CD4-positive, alpha-beta T cell (primary cell): ENCODE measurements at regions of chr17 and their contacts with region 1.

Region 1: DNA sequence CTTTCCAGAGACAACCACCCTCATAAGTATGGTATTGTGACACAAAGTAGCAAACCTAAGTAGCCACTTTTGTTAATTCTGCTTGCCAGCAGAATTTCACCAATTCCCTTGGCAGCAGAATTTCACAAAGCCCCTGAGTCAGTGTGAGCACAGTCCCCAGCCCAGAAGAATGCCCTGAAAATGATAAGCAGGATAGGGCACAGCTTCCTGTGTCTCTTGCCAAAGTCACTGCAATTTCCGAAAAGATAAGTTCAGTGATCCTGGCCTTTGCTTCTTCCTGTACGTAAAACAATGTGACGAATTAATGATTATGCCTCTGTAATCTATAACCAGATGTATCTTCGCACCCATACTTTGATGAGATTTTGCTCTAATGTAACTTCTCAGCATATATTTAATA is 16.0 kb upstream of the WIPF2 start:
- DNase-seq: no peak
- ATAC-seq: no peak
- H3K4me3 ChIP-seq: no peak overlapping the region
- H3K4me3 Mint-ChIP-seq: no peak overlapping the region
- H3K27ac ChIP-seq: no peak overlapping the region
- H3K27ac Mint-ChIP-seq: no peak overlapping the region
- H3K4me1 ChIP-seq: peaks cover 7% of the 10 kb centered on the region
- H3K4me1 Mint-ChIP-seq: peaks cover 5% of the 10 kb centered on the region
- H3K27me3 ChIP-seq: no peaks in the 10 kb centered on the region
- H3K27me3 Mint-ChIP-seq: peaks cover 9% of the 10 kb centered on the region
- CTCF ChIP-seq: no peak

Region 2: GRCh38 chr17:40219073-40219860 is 16.1 kb after region 1 on chr17 and contains the start of gene WIPF2:
- CTCF ChIA-PET with region 1: interaction called, 5 read pairs
- POLR2A ChIA-PET with region 1: no interaction called
- intact Hi-C with region 1: loop called in 1 of 2 experiments (anchors 1 kb)
- DNase-seq: peak; percentile 91 to 98 (median 95)
- ATAC-seq: peak; percentile 90
- H3K4me3 ChIP-seq: peak within 1 kb of the TSS; percentile 58
- H3K4me3 Mint-ChIP-seq: peak within 1 kb of the TSS; percentile 94
- H3K27ac ChIP-seq: peak within 1 kb of the TSS; percentile 86 to 97
- H3K27ac Mint-ChIP-seq: peak within 1 kb of the TSS; percentile 88
- H3K4me1 ChIP-seq: peaks cover 25% of the 10 kb centered on the region
- H3K4me1 Mint-ChIP-seq: peaks cover 34% of the 10 kb centered on the region
- H3K27me3 ChIP-seq: no peaks in the 10 kb centered on the region
- H3K27me3 Mint-ChIP-seq: no peaks in the 10 kb centered on the region
- CTCF ChIP-seq: peak; percentile 62
- total RNA-seq, gene WIPF2: 17.3 to 21.3 TPM